Right ventricle myocardium inferior (tissue), 1 donor: ENCODE measurements at regions of chr3 and their contacts with region 1.

Region 1: GRCh38 chr3:167166594-167167253 is 213.4 kb downstream of the ZBBX start:
- DNase-seq: peak; percentile 65
- ATAC-seq: peak; percentile 87

Region 2: GRCh38 chr3:167008791-167009190 is 157.9 kb before region 1 on chr3:
- intact Hi-C with region 1: no loop called
- DNase-seq: no peak
- ATAC-seq: no peak

Region 3: GRCh38 chr3:167151636-167152035 is 15.1 kb before region 1 on chr3:
- intact Hi-C with region 1: no loop called
- DNase-seq: no peak
- ATAC-seq: no peak

Region 4: DNA sequence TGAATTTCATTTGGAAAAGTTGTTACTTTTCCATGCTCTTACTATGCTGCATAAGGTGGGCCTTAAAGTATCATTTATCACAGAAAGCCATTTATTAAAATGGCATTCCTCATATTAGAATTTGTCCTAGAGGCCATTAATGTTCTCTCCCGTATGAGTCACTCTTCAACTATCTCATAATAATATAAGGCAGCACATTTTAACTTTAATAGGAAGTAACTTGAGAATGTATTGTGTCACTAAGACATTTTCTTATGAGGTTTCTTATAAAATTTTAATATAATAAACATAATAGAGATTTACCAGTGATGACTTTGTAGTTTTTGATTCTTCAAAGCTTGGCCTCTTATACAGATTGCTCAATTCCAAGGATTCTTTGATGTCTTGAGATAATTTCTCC is 138.6 kb after region 1 on chr3:
- intact Hi-C with region 1: loop called (anchors 5 kb)
- DNase-seq: no peak
- ATAC-seq: no peak